Ovary (tissue), 10 donors: ENCODE measurements at regions of chr10 and their contacts with region 1.

Region 1: DNA sequence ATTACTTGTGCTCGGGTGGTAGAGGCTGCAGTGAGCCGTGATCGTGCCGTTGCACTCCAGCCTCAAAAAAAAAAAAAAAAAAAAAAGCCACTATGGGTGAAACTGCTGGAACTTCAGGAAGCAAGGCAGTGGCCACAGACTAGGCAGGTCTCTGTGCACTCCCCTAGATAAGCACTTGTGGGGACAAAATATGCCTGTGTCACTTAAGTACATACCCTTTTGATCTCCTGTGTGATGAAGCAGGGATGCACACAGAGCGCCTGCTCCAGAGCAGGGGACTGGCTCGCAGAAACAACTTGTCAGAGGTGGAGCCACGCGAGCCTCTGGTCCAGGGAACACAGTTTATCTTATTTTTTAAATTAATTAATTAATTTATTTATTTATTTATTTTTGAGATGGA is 42.9 kb upstream of the PSAP start:
- DNase-seq: peak in 1 of 5 donors; percentile 20
- H3K4me3 ChIP-seq: no peak overlapping the region
- H3K27ac ChIP-seq: no peak overlapping the region
- H3K4me1 ChIP-seq: peaks cover 7% of the 10 kb centered on the region
- H3K27me3 ChIP-seq: no peaks in the 10 kb centered on the region
- CTCF ChIP-seq: no peak
- EP300 ChIP-seq: no peak
- POLR2A ChIP-seq: no peak

Region 2: DNA sequence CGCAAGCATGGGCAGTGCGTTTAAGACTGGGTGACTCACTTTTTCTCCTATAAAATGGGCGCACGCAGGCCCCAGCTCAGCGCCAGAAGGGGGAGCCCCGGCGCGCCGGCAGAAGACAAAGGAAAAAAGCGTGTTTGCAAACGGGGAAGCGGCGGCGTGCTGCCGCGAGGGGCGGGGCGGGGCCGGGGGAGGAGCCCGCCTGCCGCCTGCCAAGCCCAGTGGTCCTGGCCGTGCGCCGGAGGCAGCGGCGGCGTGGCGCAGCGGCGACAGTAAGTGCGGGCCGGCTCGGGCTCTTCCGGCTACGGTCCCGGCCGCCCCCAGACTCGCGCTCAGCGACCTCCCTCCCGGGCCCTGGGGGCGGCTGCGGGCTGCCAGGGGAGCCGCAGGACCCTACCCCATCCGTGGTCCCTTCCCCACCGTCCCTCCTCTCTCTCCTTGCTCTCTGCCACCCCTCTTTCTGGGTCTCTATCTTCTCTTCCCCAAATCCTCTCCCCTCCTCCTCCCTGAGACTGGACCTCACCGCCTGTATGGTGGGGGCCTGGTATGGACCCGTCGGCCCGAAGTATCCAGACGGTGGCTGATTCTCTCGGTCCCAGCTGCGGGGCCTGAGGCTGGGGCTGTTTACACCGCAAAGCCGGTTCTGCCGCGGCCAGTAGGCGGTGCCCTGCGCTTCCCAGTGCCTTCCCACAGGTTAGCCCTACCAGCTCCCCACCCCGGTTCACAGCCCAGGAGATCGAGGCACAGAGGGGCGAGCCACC is 574.7 kb before region 1 on chr10 and contains the start of gene SLC29A3:
- intact Hi-C with region 1: loop called in 2 of 4 experiments (anchors 5 to 10 kb)
- DNase-seq: peak; percentile 80 to 88 (median 84)
- H3K4me3 ChIP-seq: peak within 1 kb of the TSS; percentile 76
- H3K27ac ChIP-seq: peak within 1 kb of the TSS; percentile 83 to 91
- H3K4me1 ChIP-seq: peaks cover 10% of the 10 kb centered on the region
- H3K27me3 ChIP-seq: no peaks in the 10 kb centered on the region
- CTCF ChIP-seq: peak; percentile 52 to 84 (median 73)
- EP300 ChIP-seq: no peak
- POLR2A ChIP-seq: peak; percentile 74
- total RNA-seq, gene SLC29A3: 10.1 to 18.3 (median 15.5) TPM

Region 3: GRCh38 chr10:72043016-72043834 is 149.3 kb after region 1 on chr10:
- intact Hi-C with region 1: loop called in 2 of 4 experiments (anchors 2 kb)
- DNase-seq: no peak
- H3K4me3 ChIP-seq: no peak overlapping the region
- H3K27ac ChIP-seq: no peak overlapping the region
- H3K4me1 ChIP-seq: peaks cover 11% of the 10 kb centered on the region
- H3K27me3 ChIP-seq: no peaks in the 10 kb centered on the region
- CTCF ChIP-seq: no peak
- EP300 ChIP-seq: no peak
- POLR2A ChIP-seq: no peak

Region 4: GRCh38 chr10:72053690-72054089 is 159.8 kb after region 1 on chr10:
- intact Hi-C with region 1: loop called in 1 of 4 experiments (anchors 2 kb)
- DNase-seq: no peak
- H3K4me3 ChIP-seq: no peak overlapping the region
- H3K27ac ChIP-seq: no peak overlapping the region
- H3K4me1 ChIP-seq: peaks cover 9% of the 10 kb centered on the region
- H3K27me3 ChIP-seq: no peaks in the 10 kb centered on the region
- CTCF ChIP-seq: no peak
- EP300 ChIP-seq: no peak
- POLR2A ChIP-seq: no peak

Region 5: DNA sequence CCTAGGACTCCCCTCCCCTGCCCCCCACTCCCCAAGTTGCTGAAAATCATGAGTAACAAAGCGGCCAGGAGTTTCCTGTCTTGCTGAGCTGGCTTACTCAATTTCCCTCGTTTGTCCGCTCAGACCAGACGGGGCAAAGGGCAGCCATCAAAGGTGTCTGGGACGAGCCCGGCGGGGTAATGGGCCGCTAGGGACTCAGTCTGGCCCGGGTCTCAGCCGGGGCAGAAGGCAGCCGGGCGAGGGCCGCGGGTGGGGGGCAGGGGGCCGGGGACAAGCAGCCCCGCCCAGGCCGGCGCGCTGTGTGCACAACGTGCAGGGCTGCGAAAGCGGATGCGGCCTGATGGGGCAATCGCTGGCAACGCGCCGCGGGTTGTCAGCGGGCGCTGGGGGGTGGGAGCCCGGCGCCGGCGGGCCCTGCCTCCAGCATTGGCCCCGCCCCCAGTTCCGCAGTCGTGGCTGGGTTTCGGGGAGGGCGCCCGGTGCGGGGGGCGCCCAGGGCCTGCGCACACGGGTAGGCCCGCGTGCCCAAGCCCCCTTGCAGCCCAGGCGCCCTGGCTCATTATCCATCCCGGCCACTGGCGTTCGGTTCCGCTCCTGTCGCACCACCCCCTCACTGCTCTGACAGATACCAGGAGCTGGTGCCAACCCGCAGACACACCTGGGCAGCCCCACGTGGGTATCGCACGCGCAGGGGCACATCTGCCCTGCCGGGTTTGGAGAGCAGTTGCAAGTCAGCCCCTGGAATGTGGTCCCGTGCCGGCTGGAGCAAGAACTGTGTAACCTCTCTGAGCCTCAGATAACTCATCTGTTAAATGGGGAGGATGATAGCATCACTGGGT is 425.7 kb after region 1 on chr10:
- intact Hi-C with region 1: no loop called
- DNase-seq: peak; percentile 95 to 97 (median 96)
- H3K4me3 ChIP-seq: peak overlapping the region; percentile 40
- H3K27ac ChIP-seq: peak overlapping the region; percentile 71 to 88
- H3K4me1 ChIP-seq: peaks cover 38% of the 10 kb centered on the region
- H3K27me3 ChIP-seq: no peaks in the 10 kb centered on the region
- CTCF ChIP-seq: peak in 1 of 3 donors; percentile 33
- EP300 ChIP-seq: peak; percentile 68
- POLR2A ChIP-seq: peak; percentile 28